GM12878 (cell line): ENCODE measurements at regions of chr10 and their contacts with region 1.

Region 1: DNA sequence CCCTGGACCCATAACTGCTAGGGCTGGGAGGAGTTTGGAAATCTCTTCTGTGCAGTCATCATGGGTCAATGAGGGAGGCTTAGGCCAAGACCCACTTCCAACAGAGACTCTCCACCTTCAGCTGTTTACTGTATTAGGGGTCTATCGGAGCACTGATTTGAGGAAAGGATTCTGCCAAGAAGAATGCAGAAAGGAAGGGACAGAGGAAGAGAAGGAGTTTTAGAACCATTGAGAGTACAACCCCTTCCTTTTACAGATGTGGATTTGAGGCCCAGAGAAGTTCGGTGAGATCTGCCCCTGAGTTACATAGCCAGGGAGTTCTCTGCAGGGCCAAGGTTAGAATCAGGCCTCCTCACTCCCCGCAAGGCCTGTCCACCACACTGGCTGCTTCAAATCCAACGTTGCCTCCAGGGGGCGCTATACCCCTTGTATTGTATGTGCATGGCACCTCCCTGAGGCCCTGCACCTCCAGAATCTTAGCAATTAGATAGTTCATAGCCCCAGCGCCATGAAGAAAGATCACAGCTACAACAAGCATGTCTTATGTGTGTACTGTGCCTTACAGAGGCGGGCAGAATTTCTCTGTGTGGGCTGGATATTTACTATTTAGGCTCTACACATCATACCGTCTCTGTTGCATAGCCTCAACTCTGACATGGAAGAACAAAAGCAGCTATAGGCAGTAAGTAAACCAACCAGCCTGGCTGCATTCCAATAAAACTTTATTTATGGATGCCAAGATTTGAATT is 246.8 kb downstream of the SKIDA1 start:
- DNase-seq: peak; percentile 34
- ATAC-seq: peak; percentile 100
- H3K4me3 ChIP-seq: no peak overlapping the region
- H3K27ac ChIP-seq: no peak overlapping the region
- H3K4me1 ChIP-seq: no peaks in the 10 kb centered on the region
- H3K27me3 ChIP-seq: no peaks in the 10 kb centered on the region
- CTCF ChIP-seq: peak; percentile 72 to 77 (median 73)
- EP300 ChIP-seq: no peak
- POLR2A ChIP-seq: no peak
- RAD21 ChIP-seq: peak; percentile 83

Region 2: GRCh38 chr10:21069929-21070700 is 208.6 kb before region 1 on chr10:
- CTCF ChIA-PET with region 1: no interaction called
- POLR2A ChIA-PET with region 1: no interaction called
- RAD21 ChIA-PET with region 1: no interaction called
- SMC1A ChIA-PET with region 1: no interaction called
- in situ Hi-C with region 1: no loop called
- intact Hi-C with region 1: no loop called
- DNase-seq: no peak
- ATAC-seq: no peak
- H3K4me3 ChIP-seq: no peak overlapping the region
- H3K27ac ChIP-seq: no peak overlapping the region
- H3K4me1 ChIP-seq: no peaks in the 10 kb centered on the region
- H3K27me3 ChIP-seq: no peaks in the 10 kb centered on the region
- CTCF ChIP-seq: no peak
- EP300 ChIP-seq: no peak
- POLR2A ChIP-seq: no peak
- RAD21 ChIP-seq: no peak

Region 3: DNA sequence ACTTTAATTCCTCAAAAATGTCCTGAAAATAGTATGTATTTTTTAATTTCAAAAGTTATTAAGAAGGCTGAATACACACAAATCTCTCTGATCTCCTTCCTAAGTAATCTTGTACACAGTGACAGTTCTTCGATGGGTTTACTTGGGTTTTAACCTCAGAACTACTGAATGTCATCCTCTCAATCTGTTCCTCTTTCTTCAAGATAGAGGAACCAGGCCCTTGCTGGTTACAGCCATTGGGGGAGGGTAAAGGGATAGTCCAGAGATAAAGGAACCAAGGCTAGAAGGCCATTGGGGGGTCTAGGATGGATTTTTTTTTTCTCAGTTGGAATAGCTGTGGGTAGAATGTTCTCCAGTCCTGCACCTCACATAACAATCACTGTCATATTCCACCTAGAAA is 21.9 kb after region 1 on chr10:
- CTCF ChIA-PET with region 1: no interaction called
- POLR2A ChIA-PET with region 1: no interaction called
- RAD21 ChIA-PET with region 1: no interaction called
- SMC1A ChIA-PET with region 1: no interaction called
- in situ Hi-C with region 1: no loop called
- intact Hi-C with region 1: no loop called
- DNase-seq: no peak
- ATAC-seq: peak; percentile 61
- H3K4me3 ChIP-seq: no peak overlapping the region
- H3K27ac ChIP-seq: no peak overlapping the region
- H3K4me1 ChIP-seq: no peaks in the 10 kb centered on the region
- H3K27me3 ChIP-seq: no peaks in the 10 kb centered on the region
- CTCF ChIP-seq: no peak
- EP300 ChIP-seq: no peak
- POLR2A ChIP-seq: no peak
- RAD21 ChIP-seq: no peak

Region 4: DNA sequence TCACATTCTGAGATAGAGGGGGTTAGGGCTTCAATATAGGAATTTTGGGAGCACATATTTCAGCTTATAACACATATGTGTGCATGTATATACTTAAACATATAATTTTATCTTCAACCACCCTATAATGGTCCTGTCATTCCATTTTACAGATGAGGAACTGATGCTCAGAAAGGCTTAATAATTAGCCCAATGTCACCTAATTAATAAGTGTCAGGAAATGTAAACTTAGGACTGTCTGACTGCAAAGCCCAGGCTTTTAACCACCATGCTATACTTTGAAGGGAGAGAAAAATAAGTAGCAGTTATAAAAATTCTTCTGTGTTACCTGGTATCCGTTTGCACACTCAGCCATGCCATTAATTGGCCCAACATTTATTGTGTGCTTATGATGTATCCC is 74.2 kb after region 1 on chr10:
- CTCF ChIA-PET with region 1: interaction called, 3 read pairs
- POLR2A ChIA-PET with region 1: no interaction called
- RAD21 ChIA-PET with region 1: interaction called, 3 read pairs
- SMC1A ChIA-PET with region 1: interaction called, 3 read pairs
- in situ Hi-C with region 1: no loop called
- intact Hi-C with region 1: loop called (anchors 5 kb)
- DNase-seq: peak; percentile 17
- ATAC-seq: peak; percentile 89
- H3K4me3 ChIP-seq: no peak overlapping the region
- H3K27ac ChIP-seq: no peak overlapping the region
- H3K4me1 ChIP-seq: no peaks in the 10 kb centered on the region; the same call in 1 of the 2 replicates
- H3K27me3 ChIP-seq: no peaks in the 10 kb centered on the region
- CTCF ChIP-seq: no peak
- EP300 ChIP-seq: 0 out of 4 replicates have a peak, but pooled peaks of 1 of the 2 experiments have one; percentile 34
- POLR2A ChIP-seq: no peak
- RAD21 ChIP-seq: no peak

Region 5: GRCh38 chr10:21488246-21488956 is 209.7 kb after region 1 on chr10:
- CTCF ChIA-PET with region 1: interaction called, 16 read pairs
- POLR2A ChIA-PET with region 1: no interaction called
- RAD21 ChIA-PET with region 1: interaction called, 20 read pairs
- SMC1A ChIA-PET with region 1: interaction called, 11 read pairs
- in situ Hi-C with region 1: loop called (anchors 25 kb)
- intact Hi-C with region 1: no loop called
- DNase-seq: no peak
- ATAC-seq: no peak
- H3K4me3 ChIP-seq: no peak overlapping the region
- H3K27ac ChIP-seq: no peak overlapping the region
- H3K4me1 ChIP-seq: no peaks in the 10 kb centered on the region
- H3K27me3 ChIP-seq: no peaks in the 10 kb centered on the region
- CTCF ChIP-seq: no peak
- EP300 ChIP-seq: no peak
- POLR2A ChIP-seq: no peak
- RAD21 ChIP-seq: no peak

Region 6: GRCh38 chr10:21495752-21496342 is 217.2 kb after region 1 on chr10:
- CTCF ChIA-PET with region 1: interaction called, 16 read pairs
- POLR2A ChIA-PET with region 1: no interaction called
- RAD21 ChIA-PET with region 1: interaction called, 20 read pairs
- SMC1A ChIA-PET with region 1: interaction called, 11 read pairs
- in situ Hi-C with region 1: loop called (anchors 25 kb)
- intact Hi-C with region 1: loop called (anchors 1 kb)
- DNase-seq: peak; percentile 34
- ATAC-seq: peak; percentile 89
- H3K4me3 ChIP-seq: peak overlapping the region; percentile 65
- H3K27ac ChIP-seq: peak overlapping the region; percentile 35; the same call in 1 of the 2 replicates
- H3K4me1 ChIP-seq: peaks cover 20% of the 10 kb centered on the region
- H3K27me3 ChIP-seq: peaks cover 5 to 18% of the 10 kb centered on the region in 2 experiments
- CTCF ChIP-seq: peak; percentile 84 to 97 (median 89); a peak in 5 of 6 replicates
- EP300 ChIP-seq: 0 out of 4 replicates have a peak, but pooled peaks of 1 of the 2 experiments have one; percentile 34
- POLR2A ChIP-seq: peak; percentile 61
- RAD21 ChIP-seq: peak; percentile 85

Region 7: GRCh38 chr10:21724695-21725367 is 446.2 kb after region 1 on chr10:
- CTCF ChIA-PET with region 1: interaction called, 11 read pairs
- POLR2A ChIA-PET with region 1: no interaction called
- RAD21 ChIA-PET with region 1: interaction called, 5 read pairs
- SMC1A ChIA-PET with region 1: interaction called, 3 read pairs
- in situ Hi-C with region 1: loop called (anchors 10 kb)
- intact Hi-C with region 1: no loop called
- DNase-seq: peak; percentile 59
- ATAC-seq: peak; percentile 93
- H3K4me3 ChIP-seq: no peak overlapping the region
- H3K27ac ChIP-seq: 0 out of 2 replicates have a peak overlapping the region, but pooled peaks have one; percentile 22
- H3K4me1 ChIP-seq: peaks cover 11% of the 10 kb centered on the region
- H3K27me3 ChIP-seq: no peaks in the 10 kb centered on the region
- CTCF ChIP-seq: no peak
- EP300 ChIP-seq: no peak
- POLR2A ChIP-seq: no peak
- RAD21 ChIP-seq: no peak

Region 8: DNA sequence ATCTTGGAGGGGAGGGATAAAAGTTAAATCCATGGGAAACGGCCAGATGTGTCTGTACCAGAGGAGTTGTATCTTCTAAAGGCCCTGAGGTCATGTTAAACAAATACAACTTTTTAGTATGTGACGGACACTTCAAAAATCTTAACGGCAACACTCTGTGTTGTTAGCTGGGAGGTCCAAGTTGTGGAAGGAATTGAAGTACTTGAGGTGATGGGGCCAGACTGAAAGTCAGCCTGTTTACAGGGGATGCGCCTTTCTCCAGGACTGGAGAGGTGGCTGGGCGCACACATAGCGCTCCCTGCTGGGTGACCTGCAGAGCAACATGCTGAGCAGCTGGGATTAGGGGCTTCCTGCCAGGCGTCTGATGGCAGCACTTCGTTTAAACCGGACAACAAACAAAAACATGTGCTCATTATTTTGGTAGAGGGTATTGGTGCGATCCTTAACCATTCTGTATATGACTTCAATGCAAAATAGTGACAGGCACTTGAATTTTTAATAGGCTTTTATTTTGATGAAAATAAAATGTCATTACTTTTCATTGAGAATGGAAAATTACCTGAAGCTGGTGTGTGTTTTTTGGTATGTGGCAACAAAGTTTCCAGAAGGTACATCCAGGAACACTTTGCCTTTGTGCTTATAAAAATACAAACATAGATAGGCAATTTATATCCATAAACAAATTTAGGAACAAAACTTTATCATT is 453.6 kb after region 1 on chr10:
- CTCF ChIA-PET with region 1: interaction called, 5 read pairs
- POLR2A ChIA-PET with region 1: no interaction called
- RAD21 ChIA-PET with region 1: interaction called, 5 read pairs
- SMC1A ChIA-PET with region 1: interaction called, 5 read pairs
- in situ Hi-C with region 1: loop called (anchors 10 kb)
- intact Hi-C with region 1: loop called (anchors 2 kb)
- DNase-seq: no peak
- ATAC-seq: peak; percentile 82
- H3K4me3 ChIP-seq: no peak overlapping the region
- H3K27ac ChIP-seq: no peak overlapping the region
- H3K4me1 ChIP-seq: no peaks in the 10 kb centered on the region
- H3K27me3 ChIP-seq: no peaks in the 10 kb centered on the region
- CTCF ChIP-seq: peak; percentile 74 to 86 (median 79)
- EP300 ChIP-seq: no peak
- POLR2A ChIP-seq: no peak
- RAD21 ChIP-seq: peak; percentile 92

Region 9: GRCh38 chr10:21953585-21954057 is 675.0 kb after region 1 on chr10:
- CTCF ChIA-PET with region 1: no interaction called
- POLR2A ChIA-PET with region 1: no interaction called
- RAD21 ChIA-PET with region 1: interaction called, 6 read pairs
- SMC1A ChIA-PET with region 1: no interaction called
- in situ Hi-C with region 1: no loop called
- intact Hi-C with region 1: loop called (anchors 5 kb)
- DNase-seq: no peak
- ATAC-seq: peak; percentile 88
- H3K4me3 ChIP-seq: no peak overlapping the region
- H3K27ac ChIP-seq: no peak overlapping the region
- H3K4me1 ChIP-seq: peaks cover 12% of the 10 kb centered on the region
- H3K27me3 ChIP-seq: no peaks in the 10 kb centered on the region
- CTCF ChIP-seq: peak; percentile 33 to 39 (median 37); a peak in 4 of 6 replicates
- EP300 ChIP-seq: no peak
- POLR2A ChIP-seq: no peak
- RAD21 ChIP-seq: peak; percentile 67